ENCODE measurements at regions of chr1 and their contacts with region 1.

Region 1: DNA sequence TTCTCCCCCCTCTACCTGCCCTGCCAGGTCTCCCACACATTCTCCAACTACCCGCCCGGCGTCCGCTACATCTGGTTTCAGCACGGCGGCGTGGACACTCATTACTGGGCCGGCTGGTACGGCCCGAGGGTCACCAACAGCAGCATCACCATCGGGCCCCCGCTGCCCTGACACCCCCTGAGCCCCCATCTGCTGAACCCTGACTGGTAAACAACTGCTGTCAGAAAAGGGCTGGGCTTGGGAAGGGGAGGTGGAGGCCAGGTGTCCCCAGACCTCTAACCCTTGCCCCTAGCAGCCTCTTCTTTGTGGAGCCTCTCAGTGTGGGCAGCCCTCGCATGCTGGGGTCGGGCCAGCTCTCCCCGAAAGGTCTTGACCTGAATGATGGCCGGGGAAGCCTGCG is 2.9 kb upstream of the FBXO6 start:
- DNase-seq: no peak
- H3K4me3 Mint-ChIP-seq: no peak overlapping the region
- H3K27ac Mint-ChIP-seq: no peak overlapping the region
- H3K4me1 Mint-ChIP-seq: no peaks in the 10 kb centered on the region
- H3K27me3 Mint-ChIP-seq: no peaks in the 10 kb centered on the region

Region 2: DNA sequence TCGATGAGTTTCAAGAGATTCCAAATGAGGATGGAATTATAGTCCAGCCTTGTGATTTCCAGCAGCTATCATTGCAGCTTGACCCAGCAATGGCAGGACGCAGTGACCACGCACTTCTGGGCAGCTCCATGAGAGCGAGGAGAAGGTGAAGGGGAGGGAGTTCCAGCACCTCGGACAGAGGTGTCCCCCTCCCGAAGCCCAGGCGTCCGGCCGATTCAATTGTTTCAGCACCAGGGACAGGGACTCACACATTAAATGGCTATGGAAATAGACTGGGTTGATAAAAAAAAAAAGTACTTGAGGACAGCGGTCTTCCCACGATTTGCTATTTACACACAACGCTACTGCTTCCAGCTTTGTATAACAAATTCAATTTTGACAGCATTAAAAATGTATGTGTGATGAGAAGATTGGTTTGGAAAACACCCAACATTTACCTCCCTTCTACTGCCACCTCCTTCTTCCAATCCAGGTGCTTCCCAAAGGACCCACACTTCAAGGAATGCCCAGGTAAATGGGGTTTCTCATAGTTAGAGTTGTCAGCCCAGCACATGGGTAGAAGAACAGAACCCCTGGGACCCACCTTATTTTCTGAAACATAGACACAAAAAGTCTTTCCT is 110.3 kb before region 1 on chr1:
- CTCF ChIA-PET with region 1: no interaction called
- POLR2A ChIA-PET with region 1: no interaction called
- intact Hi-C with region 1: no loop called
- DNase-seq: peak; percentile 61
- H3K4me3 Mint-ChIP-seq: no peak overlapping the region
- H3K27ac Mint-ChIP-seq: no peak overlapping the region
- H3K4me1 Mint-ChIP-seq: no peaks in the 10 kb centered on the region
- H3K27me3 Mint-ChIP-seq: peaks cover 38% of the 10 kb centered on the region

Region 3: DNA sequence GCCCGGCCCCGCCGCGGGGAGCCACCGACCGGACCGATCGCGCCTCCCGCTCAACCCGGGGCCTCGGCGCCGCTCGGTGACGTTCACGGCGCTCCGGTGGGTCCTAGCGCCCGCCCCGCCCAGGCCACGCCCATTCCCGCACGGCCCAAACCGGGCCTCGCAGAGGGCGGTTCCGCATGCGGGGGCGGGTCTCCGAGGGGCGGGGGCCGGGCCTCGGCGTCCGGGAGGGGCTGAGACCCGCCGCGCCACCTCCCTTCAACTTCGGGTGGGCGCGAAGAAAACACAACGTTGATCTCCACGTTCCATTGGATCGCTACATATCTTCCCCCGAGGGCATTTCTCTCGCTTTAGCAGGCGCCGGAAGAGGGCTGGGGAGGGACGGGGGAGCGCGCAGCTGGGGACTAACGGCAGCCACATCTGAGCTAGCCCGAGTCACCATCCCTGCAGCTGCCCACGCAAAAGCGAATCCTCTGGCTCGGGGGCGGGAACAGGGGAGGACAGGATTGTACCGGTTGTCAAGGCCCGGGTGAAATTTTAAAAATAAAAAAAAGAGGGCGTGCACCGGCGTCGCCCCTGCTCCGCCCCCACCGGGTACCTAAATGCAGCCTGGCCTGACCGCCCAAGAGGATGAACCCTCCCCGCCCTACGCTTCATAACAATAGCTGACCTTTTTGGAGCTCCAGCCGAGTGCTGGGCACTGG is 20.1 kb after region 1 on chr1 and contains the start of gene MAD2L2:
- CTCF ChIA-PET with region 1: interaction called, 20 read pairs
- POLR2A ChIA-PET with region 1: interaction called, 10 read pairs
- intact Hi-C with region 1: loop called (anchors 2 kb)
- DNase-seq: peak; percentile 92
- H3K4me3 Mint-ChIP-seq: peak within 1 kb of the TSS; percentile 86
- H3K27ac Mint-ChIP-seq: peak within 1 kb of the TSS; percentile 92
- H3K4me1 Mint-ChIP-seq: peaks cover 11% of the 10 kb centered on the region
- H3K27me3 Mint-ChIP-seq: peaks cover 2% of the 10 kb centered on the region
- total RNA-seq, gene MAD2L2: 88.5 to 93.2 TPM

Region 4: GRCh38 chr1:11711490-11711889 is 50.4 kb after region 1 on chr1:
- CTCF ChIA-PET with region 1: interaction called, 13 read pairs
- POLR2A ChIA-PET with region 1: no interaction called
- intact Hi-C with region 1: no loop called
- DNase-seq: no peak
- H3K4me3 Mint-ChIP-seq: no peak overlapping the region
- H3K27ac Mint-ChIP-seq: no peak overlapping the region
- H3K4me1 Mint-ChIP-seq: no peaks in the 10 kb centered on the region
- H3K27me3 Mint-ChIP-seq: peaks cover 2% of the 10 kb centered on the region